Left cardiac atrium (tissue), 4 donors: ENCODE measurements at regions of chr2 and their contacts with region 1.

Region 1: DNA sequence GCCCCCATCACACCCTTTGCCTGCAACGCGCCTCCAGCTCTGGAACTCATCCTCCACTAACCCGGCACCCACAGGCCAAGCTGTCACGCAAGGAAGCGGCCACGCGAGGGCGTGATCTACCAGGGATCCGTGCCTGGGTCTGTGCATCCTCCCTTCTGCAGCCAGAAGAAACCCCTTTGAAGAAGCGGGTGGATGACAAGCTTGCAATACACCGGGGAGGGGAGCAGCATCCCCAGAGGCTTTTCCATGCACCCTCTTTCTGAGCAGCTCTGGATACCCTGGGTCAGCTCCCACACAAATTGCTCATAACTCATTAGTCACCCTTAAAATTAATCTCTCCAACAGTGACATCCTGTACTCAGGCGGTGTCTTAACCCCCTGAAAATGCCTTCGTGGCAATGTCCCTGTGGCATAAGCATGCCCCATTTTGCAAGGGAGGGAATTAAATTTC is 47.6 kb downstream of the PDCL3 start:
- DNase-seq: peak; percentile 75
- ATAC-seq: peak; percentile 81 to 89

Region 2: DNA sequence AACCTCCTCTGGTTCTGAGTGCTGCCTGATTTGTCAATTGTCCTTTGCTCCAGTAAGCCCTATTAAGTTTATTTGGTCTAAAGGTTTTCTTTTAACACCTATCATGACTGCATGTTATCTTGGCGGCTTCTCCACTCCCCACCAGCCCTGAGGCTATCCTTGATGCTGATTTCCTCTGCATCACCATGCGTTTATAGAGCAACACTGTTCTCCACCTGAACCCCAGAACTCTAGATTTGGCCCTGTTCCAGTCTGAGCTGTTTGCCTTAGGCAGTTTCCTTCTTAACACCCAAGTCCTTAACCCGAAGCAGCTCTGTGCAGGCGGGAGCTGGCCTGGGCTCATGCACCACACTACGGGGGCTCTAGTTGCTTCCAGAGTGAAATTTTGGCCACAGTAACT is 111.3 kb after region 1 on chr2:
- intact Hi-C with region 1: loop called (anchors 5 to 10 kb)
- DNase-seq: no peak
- ATAC-seq: no peak

Region 3: DNA sequence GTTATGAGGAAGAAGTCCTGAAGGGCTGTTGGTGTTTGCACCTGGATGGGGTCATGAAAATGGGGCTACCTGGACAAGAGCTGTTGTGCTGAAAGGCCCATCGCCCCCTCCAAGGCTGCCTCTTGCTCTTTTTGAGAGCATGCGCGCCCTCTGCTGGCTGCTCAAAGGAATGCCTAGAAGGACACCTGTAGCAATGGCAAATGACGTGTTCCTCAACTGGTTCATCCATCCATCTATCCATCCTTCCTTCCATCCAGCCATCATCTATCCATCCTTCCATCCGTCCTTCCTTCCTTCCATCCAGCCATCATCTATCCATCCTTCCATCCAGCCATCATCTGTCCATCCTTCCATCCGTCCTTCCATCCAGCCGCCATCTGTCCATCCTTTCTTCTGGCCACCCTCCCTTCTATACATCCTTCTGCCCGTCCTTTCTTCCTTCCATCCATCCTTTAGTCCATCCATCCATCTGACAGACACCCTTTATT is 374.5 kb after region 1 on chr2:
- intact Hi-C with region 1: loop called (anchors 2 to 5 kb)
- DNase-seq: peak; percentile 86
- ATAC-seq: peak; percentile 75 to 76